ENCODE measurements at regions of chr1 and their contacts with region 1.

Region 1: DNA sequence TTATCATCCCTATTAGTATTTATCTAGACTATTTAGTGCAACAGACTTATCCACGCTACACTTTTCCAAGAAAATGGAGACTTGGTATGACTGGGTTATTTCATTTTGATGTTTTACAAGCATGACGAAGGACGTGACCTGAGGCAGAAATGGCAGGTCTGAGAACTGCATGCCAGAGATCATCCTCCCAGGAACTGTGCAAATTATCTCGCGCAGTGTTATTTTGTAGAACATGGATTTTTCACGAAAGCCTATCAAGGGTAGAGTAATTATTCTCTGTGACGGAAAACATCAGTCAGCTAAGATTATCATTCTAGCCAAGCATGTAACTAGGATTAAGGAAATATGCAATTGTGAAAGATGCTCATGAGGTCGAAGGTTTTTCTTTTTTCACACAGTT is 361.5 kb upstream of the AJAP1 start:
- DNase-seq: no peak
- H3K4me3 ChIP-seq: no peak overlapping the region
- H3K27ac ChIP-seq: no peak overlapping the region
- H3K4me1 ChIP-seq: no peaks in the 10 kb centered on the region
- H3K27me3 ChIP-seq: no peaks in the 10 kb centered on the region
- CTCF ChIP-seq: no peak

Region 2: DNA sequence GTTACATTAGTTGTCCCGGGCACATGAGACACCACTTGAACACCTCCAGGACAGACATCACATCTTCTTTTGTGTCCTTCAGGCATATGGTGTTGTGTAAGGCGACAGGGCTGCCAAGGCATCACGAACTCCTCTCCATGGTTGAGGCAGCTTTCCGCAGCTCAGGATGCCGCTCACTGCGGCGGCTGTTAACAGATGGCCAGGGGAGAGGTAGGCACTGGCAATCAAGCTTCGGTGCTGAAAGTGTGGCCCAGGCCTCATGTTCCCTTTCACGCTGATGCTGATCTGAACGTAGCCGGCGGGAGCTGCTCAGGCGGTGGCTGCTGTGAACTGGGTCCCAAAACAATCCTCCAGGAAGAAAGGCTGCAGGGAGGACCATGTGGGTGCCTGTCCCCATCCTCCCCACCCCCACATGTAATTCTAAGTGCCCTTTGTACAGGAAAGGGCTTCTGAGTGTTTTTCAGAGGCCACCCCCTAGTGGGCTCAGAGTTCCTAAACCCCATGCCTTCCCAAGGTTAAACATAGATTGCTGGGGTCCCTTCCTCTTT is 74.4 kb after region 1 on chr1:
- CTCF ChIA-PET with region 1: no interaction called
- dilution Hi-C with region 1: loop called (anchors 5 kb)
- in situ Hi-C with region 1: no loop called
- intact Hi-C with region 1: no loop called
- DNase-seq: no peak
- H3K4me3 ChIP-seq: no peak overlapping the region
- H3K27ac ChIP-seq: no peak overlapping the region
- H3K4me1 ChIP-seq: no peaks in the 10 kb centered on the region
- H3K27me3 ChIP-seq: no peaks in the 10 kb centered on the region
- CTCF ChIP-seq: no peak

Region 3: DNA sequence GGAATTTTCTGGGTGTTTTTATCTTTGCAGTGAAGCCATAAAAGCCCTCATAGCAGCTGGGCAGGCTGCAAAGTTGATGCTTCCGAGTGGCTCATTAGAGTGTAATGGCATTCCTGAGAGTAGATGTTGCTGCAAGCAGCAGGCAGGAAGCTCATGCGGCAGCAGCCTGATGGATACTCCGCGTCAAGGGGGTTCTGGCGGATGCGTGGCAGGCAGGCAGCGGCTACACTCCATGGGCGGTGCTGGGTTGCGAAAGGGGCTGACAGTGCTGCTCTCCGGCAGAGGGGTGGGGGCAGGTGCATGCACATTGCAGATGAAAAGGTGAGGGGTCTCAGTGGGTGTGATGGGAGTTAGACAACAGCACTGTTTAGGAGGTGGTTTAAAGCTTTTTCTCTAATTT is 268.3 kb after region 1 on chr1:
- CTCF ChIA-PET with region 1: no interaction called
- dilution Hi-C with region 1: no loop called
- in situ Hi-C with region 1: no loop called
- intact Hi-C with region 1: no loop called
- DNase-seq: no peak
- H3K4me3 ChIP-seq: no peak overlapping the region
- H3K27ac ChIP-seq: no peak overlapping the region
- H3K4me1 ChIP-seq: no peaks in the 10 kb centered on the region
- H3K27me3 ChIP-seq: no peaks in the 10 kb centered on the region
- CTCF ChIP-seq: no peak